Activated CD8-positive, alpha-beta T cell treated with anti-CD3 and anti-CD28 coated beads, Interleukin-2, amount 10 ng/mL, durations not matched to agents 7 days and 5 days (primary cell): ENCODE measurements at regions of chr19 and their contacts with region 1.

Region 1: DNA sequence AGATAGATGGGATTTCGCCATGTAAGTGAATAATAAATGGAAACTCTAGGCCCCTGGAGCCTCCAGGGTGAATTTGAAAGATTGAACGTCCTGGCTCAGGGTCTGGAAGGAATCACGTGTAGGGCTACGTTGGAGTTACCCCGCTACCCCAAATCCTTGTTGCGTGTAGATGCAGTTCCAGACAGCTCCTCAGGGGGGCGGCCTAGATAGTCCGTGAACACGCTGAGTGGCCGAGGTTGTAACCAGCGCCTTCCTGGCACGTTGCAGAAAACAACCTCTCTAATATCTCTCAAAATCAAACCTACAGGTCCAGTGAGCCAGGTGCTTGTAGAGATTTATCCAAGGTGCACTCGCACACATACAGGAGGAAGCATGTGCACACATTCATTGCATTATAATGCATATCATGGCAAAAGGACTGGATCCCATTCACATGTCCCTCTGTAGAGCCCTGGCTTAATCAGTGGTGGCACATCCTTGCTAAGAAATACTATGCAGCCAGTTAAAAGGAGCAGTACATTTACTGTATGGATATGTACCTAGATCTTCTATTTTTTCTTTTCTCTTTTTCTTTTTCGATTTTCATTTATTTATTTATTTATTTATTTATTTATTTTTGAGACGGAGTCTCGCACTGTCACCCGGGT is 2.5 kb upstream of the KEAP1 start:
- DNase-seq: peak; percentile 89
- ATAC-seq: peak; percentile 18
- H3K4me3 Mint-ChIP-seq: peak overlapping the region; percentile 28
- H3K27ac Mint-ChIP-seq: no peak overlapping the region
- H3K4me1 Mint-ChIP-seq: peaks cover 36% of the 10 kb centered on the region
- H3K27me3 Mint-ChIP-seq: no peaks in the 10 kb centered on the region

Region 2: GRCh38 chr19:10551698-10552301 is 46.1 kb after region 1 on chr19:
- CTCF ChIA-PET with region 1: interaction called, 34 read pairs
- POLR2A ChIA-PET with region 1: interaction called, 4 read pairs
- DNase-seq: peak; percentile 62
- ATAC-seq: no peak
- H3K4me3 Mint-ChIP-seq: peak overlapping the region; percentile 25
- H3K27ac Mint-ChIP-seq: peak overlapping the region; percentile 93
- H3K4me1 Mint-ChIP-seq: peaks cover 62% of the 10 kb centered on the region
- H3K27me3 Mint-ChIP-seq: no peaks in the 10 kb centered on the region